ENCODE measurements at regions of chr10 and their contacts with region 1.

Region 1: GRCh38 chr10:22244001-22244400 is 26.2 kb upstream of the EBLN1 start:
- DNase-seq: no peak

Region 2: GRCh38 chr10:22316285-22317120 is 72.5 kb after region 1 on chr10 and contains the start of gene COMMD3:
- in situ Hi-C with region 1: loop called (anchors 10 kb)
- DNase-seq: peak; percentile 80
- total RNA-seq, gene COMMD3: 50.6 and 50.7 TPM in 2 replicates

Region 3: GRCh38 chr10:22630234-22631174 is 386.5 kb after region 1 on chr10:
- in situ Hi-C with region 1: no loop called
- DNase-seq: peak; percentile 56